Activated CD8-positive, alpha-beta T cell treated with anti-CD3 and anti-CD28 coated beads, Interleukin-2, amount 10 ng/mL, durations not matched to agents 7 days and 5 days (primary cell): ENCODE measurements at regions of chr5 and their contacts with region 1.

Region 1: DNA sequence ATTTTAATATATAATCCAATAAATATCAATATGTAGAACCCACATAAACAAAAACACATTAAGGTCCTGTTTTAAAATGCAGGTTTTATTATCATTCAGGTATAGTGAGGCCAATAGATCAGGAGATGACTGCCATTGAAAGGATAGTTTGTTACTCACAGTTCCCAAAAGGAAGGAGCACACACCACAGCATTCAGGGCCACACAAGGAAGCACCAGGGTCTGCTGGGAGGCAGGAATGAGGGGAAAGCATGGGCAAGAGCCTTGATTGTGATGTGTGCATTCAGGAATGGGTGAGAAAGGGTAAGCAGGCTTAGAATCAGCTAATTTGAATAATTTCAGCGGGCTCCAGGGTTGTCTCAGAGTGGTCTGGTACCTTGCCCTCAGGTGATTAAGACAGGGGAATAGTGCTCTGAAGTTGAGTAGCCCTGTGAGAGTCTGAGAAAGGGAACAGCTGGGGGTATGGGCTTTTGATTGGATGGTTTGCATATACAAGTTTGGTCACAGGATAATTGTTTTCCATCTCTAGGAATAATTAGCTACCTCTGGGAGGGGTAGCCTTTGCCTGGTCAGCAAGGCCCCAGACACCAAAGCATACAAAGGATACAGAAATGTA is 19.8 kb upstream of the OTULIN start:
- DNase-seq: no peak
- ATAC-seq: no peak
- H3K4me3 Mint-ChIP-seq: no peak overlapping the region
- H3K27ac Mint-ChIP-seq: no peak overlapping the region
- H3K4me1 Mint-ChIP-seq: peaks cover 14% of the 10 kb centered on the region
- H3K27me3 Mint-ChIP-seq: peaks cover 24% of the 10 kb centered on the region

Region 2: DNA sequence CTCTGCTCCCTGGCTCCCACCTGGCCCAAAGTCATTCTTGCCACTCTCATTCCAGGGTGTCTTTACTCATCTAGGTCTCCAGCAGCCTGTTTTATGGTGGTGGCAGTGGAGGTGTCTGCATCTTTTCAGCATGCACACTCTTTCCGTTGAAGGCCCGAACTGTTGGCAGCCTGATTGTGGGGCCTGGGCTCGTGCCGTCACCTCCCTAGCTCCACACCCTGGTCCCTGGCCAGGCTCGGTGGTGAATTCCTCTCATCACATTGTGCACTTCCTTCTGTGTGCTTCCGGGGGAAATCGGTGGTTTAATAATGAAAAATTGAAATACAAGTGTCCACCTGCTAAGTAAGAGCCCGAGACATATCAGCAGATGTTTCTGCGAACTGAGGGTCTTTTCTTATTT is 287.3 kb before region 1 on chr5:
- CTCF ChIA-PET with region 1: interaction called, 304 read pairs
- POLR2A ChIA-PET with region 1: no interaction called
- DNase-seq: no peak
- ATAC-seq: no peak
- H3K4me3 Mint-ChIP-seq: no peak overlapping the region
- H3K27ac Mint-ChIP-seq: no peak overlapping the region
- H3K4me1 Mint-ChIP-seq: peaks cover 15% of the 10 kb centered on the region
- H3K27me3 Mint-ChIP-seq: peaks cover 2% of the 10 kb centered on the region

Region 3: DNA sequence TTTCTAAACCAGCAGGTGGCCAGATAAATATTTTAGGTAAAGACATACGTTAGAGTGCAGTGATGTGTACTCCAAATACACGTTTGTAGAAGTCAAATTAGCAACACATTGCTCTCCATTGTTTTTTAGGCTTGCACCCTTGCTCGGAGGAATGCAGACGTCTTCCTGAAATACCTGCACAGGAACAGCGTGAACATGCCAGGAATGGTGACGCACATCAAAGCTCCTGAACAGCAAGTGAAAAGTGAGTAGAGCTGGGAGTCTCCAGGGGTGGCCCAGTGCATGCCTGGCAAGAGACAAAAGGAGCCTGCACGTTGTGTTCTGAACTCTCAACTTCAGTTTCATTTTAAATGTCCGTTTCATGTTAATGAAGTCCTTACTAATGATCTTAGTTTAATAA is 270.6 kb before region 1 on chr5:
- CTCF ChIA-PET with region 1: interaction called, 304 read pairs
- POLR2A ChIA-PET with region 1: no interaction called
- DNase-seq: no peak
- ATAC-seq: no peak
- H3K4me3 Mint-ChIP-seq: no peak overlapping the region
- H3K27ac Mint-ChIP-seq: no peak overlapping the region
- H3K4me1 Mint-ChIP-seq: peaks cover 21% of the 10 kb centered on the region
- H3K27me3 Mint-ChIP-seq: peaks cover 3% of the 10 kb centered on the region

Region 4: DNA sequence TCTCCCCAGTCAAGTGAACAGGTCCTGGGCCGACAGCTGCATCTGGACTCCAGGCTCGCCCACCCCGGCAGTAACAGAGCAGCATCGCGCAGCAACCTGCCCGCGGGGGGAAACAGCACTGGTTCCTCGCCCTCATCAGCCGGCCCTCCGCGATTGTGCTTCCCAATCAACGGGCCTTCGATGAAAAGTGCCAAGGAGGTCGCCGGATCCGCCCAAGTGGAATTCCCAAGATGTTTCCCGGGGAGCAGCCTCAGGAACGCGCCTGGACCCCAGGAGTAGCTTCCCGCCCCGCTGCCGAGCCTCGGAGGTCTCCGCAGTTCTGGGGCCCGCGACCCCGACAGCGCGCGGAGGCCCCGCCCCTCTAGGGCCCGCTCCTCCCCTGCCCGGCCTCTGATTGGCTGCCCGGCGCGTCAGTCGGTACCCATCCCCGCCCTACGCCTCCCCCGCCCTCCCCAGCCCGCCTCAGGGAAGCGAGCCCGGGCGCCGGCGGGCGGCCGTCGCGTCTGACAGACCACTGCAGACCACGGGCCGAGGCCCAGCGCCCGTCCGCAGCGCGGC is 63.3 kb before region 1 on chr5 and contains the start of gene OTULINL:
- CTCF ChIA-PET with region 1: interaction called, 34 read pairs
- POLR2A ChIA-PET with region 1: interaction called, 6 read pairs
- DNase-seq: peak; percentile 91
- ATAC-seq: peak; percentile 91
- H3K4me3 Mint-ChIP-seq: peak within 1 kb of the TSS; percentile 84
- H3K27ac Mint-ChIP-seq: peak within 1 kb of the TSS; percentile 87
- H3K4me1 Mint-ChIP-seq: peaks cover 43% of the 10 kb centered on the region
- H3K27me3 Mint-ChIP-seq: peaks cover 15% of the 10 kb centered on the region
- total RNA-seq, gene OTULINL: 59.6 to 68.3 TPM

Region 5: GRCh38 chr5:14595189-14595588 is 49.5 kb before region 1 on chr5:
- CTCF ChIA-PET with region 1: interaction called, 21 read pairs
- POLR2A ChIA-PET with region 1: interaction called, 5 read pairs
- DNase-seq: peak; percentile 75
- ATAC-seq: peak; percentile 79
- H3K4me3 Mint-ChIP-seq: peak overlapping the region; percentile 66
- H3K27ac Mint-ChIP-seq: peak overlapping the region; percentile 97
- H3K4me1 Mint-ChIP-seq: peaks cover 91% of the 10 kb centered on the region
- H3K27me3 Mint-ChIP-seq: no peaks in the 10 kb centered on the region

Region 6: DNA sequence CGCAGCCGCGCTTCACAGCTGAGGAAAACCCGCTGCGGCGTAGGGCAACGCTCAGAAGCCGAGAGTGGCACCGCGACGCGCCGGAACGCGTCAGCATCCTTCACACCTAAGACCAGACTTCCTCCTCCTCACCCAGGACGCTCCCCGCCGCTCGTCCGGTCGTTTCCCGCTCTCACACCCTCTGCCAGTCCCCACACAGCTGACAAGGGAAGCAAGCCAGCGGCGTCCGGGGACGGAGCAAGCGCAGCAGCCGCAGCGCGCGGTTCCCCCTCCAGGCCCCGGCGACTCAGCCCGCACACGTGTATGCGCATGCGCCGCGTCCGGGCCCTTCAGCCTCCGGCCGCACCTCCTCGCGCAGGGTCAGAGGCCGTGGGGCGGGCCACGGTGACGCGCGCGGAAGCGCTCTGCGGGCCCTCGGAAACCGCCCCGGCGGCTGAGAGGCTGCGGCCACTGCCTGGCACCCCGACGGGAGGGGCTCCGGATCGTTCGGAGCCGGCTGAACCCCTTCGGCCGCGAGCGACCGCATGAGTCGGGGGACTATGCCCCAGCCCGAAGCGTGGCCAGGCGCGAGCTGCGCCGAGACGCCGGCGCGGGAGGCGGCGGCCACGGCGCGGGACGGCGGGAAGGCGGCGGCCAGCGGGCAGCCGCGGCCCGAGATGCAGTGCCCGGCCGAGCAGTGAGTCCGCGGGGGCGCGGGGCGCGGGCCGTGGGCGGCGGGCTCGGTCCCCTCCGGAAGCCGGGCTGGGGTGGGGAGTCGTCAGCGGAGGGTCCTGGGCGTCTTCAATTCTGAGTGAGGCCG is 19.8 kb after region 1 on chr5 and contains the start of gene OTULIN:
- CTCF ChIA-PET with region 1: interaction called, 66 read pairs
- POLR2A ChIA-PET with region 1: no interaction called
- DNase-seq: peak; percentile 91
- ATAC-seq: peak; percentile 73
- H3K4me3 Mint-ChIP-seq: peak within 1 kb of the TSS; percentile 94
- H3K27ac Mint-ChIP-seq: peak within 1 kb of the TSS; percentile 98
- H3K4me1 Mint-ChIP-seq: peaks cover 73% of the 10 kb centered on the region
- H3K27me3 Mint-ChIP-seq: no peaks in the 10 kb centered on the region
- total RNA-seq, gene OTULIN: 71.2 to 80.7 TPM

Region 7: DNA sequence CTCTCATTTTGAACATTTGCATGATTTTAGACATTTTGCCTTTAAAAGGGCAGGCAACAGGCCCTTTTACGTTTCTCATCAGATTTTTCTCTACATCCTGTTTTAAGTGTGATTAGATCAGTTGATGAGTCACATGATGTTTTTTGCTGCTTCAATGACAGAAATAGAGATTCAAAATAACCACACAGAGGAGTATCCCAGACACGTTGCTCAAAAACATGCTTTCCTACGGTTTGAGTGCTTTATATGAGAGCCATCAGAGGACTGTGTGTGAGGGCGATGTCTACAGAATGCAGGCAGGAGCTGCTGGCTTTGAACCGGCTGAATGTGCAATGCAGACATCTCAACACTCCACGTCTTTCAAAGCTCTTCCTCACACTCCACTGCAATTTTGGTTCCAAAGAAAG is 61.9 kb after region 1 on chr5:
- CTCF ChIA-PET with region 1: interaction called, 13 read pairs
- POLR2A ChIA-PET with region 1: no interaction called
- DNase-seq: peak; percentile 51
- ATAC-seq: peak; percentile 93
- H3K4me3 Mint-ChIP-seq: peak overlapping the region; percentile 56
- H3K27ac Mint-ChIP-seq: peak overlapping the region; percentile 97
- H3K4me1 Mint-ChIP-seq: peaks cover 78% of the 10 kb centered on the region
- H3K27me3 Mint-ChIP-seq: no peaks in the 10 kb centered on the region